ENCODE measurements at regions of chr5 and their contacts with region 1.

Region 1: GRCh38 chr5:137660349-137660817 is 75.5 kb downstream of the KLHL3 start:
- DNase-seq: peak; percentile 23
- ATAC-seq: peak; percentile 77
- H3K4me3 Mint-ChIP-seq: no peak overlapping the region
- H3K27ac Mint-ChIP-seq: no peak overlapping the region
- H3K4me1 Mint-ChIP-seq: peaks cover 2% of the 10 kb centered on the region
- H3K27me3 Mint-ChIP-seq: no peaks in the 10 kb centered on the region
- CTCF ChIP-seq: peak; percentile 17

Region 2: DNA sequence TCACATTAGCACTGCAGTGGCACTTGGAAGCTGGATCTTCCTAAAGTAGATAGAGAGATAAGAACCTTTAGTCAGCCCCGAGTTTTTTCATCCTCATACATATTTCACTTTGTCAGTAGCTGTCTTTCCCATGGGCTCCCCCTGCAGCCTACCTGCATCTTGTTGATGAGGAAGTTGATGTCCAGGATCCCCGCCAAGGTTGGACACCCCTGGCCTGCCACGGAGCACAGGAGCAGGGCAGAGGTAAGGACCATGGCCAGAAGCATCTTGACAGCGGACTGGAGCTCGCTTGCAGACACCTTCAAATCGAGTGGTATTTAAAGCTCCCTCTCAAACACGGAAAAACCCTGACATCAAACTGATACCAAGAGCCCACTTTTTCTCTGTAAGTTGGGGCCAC is 1764.8 kb before region 1 on chr5 and contains the start of gene IL9:
- CTCF ChIA-PET with region 1: no interaction called
- POLR2A ChIA-PET with region 1: no interaction called
- intact Hi-C with region 1: no loop called
- DNase-seq: no peak
- ATAC-seq: no peak
- H3K4me3 Mint-ChIP-seq: no peak within 1 kb of the TSS
- H3K27ac Mint-ChIP-seq: no peak within 1 kb of the TSS
- H3K4me1 Mint-ChIP-seq: no peaks in the 10 kb centered on the region
- H3K27me3 Mint-ChIP-seq: peaks cover 20% of the 10 kb centered on the region
- CTCF ChIP-seq: no peak
- total RNA-seq, gene IL9: not detected in 2 replicates

Region 3: DNA sequence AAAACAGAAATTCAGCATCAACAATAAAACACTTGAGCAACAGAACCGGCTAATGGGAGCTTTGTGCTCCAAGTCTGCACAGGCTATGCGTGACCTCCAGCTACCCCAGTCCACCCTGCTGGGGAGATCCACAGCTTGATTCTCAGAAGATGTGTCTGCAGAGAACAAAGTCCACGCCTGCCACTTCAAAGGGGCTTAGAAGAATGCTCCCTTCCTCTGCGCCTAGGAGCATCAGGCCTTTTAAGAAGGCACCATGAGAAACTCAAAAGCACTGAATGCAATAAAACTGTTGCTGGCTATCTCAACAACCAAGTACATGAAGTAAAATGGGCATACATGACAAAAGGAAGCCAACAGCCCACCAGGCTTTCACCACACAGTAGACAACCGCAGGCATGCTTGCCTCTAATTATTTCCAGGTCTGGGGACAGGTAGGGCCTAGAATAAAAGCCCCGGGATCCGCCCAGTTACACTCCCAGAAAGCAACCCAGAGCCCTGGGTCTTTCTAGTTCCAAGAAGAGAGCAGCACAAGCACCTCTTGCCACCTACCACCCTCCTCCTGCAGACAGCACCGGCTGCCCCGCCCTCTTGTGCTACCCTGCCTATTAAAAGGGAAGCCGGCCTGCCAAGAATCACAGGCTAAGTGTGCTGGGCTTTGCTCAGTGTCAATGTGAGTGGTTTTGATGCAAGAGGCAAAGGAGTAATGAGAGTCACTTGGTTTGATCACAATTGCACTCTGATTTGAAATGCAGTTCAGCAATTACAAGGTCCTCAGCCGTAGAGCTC is 284.4 kb before region 1 on chr5:
- CTCF ChIA-PET with region 1: no interaction called
- POLR2A ChIA-PET with region 1: no interaction called
- intact Hi-C with region 1: no loop called
- DNase-seq: no peak
- ATAC-seq: no peak
- H3K4me3 Mint-ChIP-seq: no peak overlapping the region
- H3K27ac Mint-ChIP-seq: no peak overlapping the region
- H3K4me1 Mint-ChIP-seq: no peaks in the 10 kb centered on the region
- H3K27me3 Mint-ChIP-seq: peaks cover 7% of the 10 kb centered on the region
- CTCF ChIP-seq: no peak

Region 4: GRCh38 chr5:137619191-137619870 is 41.1 kb before region 1 on chr5:
- CTCF ChIA-PET with region 1: no interaction called
- POLR2A ChIA-PET with region 1: interaction called, 10 read pairs
- intact Hi-C with region 1: no loop called
- DNase-seq: no peak
- ATAC-seq: no peak
- H3K4me3 Mint-ChIP-seq: no peak overlapping the region
- H3K27ac Mint-ChIP-seq: no peak overlapping the region
- H3K4me1 Mint-ChIP-seq: peaks cover 5% of the 10 kb centered on the region
- H3K27me3 Mint-ChIP-seq: no peaks in the 10 kb centered on the region
- CTCF ChIP-seq: no peak

Region 5: GRCh38 chr5:137735555-137736284 is 75.3 kb after region 1 on chr5 and contains the start of gene KLHL3:
- CTCF ChIA-PET with region 1: interaction called, 80 read pairs
- POLR2A ChIA-PET with region 1: no interaction called
- intact Hi-C with region 1: no loop called
- DNase-seq: peak; percentile 15
- ATAC-seq: peak; percentile 47
- H3K4me3 Mint-ChIP-seq: no peak within 1 kb of the TSS
- H3K27ac Mint-ChIP-seq: no peak within 1 kb of the TSS
- H3K4me1 Mint-ChIP-seq: no peaks in the 10 kb centered on the region
- H3K27me3 Mint-ChIP-seq: peaks cover 2% of the 10 kb centered on the region
- CTCF ChIP-seq: no peak
- total RNA-seq, gene KLHL3: 5.3 and 5.9 TPM in 2 replicates

Region 6: DNA sequence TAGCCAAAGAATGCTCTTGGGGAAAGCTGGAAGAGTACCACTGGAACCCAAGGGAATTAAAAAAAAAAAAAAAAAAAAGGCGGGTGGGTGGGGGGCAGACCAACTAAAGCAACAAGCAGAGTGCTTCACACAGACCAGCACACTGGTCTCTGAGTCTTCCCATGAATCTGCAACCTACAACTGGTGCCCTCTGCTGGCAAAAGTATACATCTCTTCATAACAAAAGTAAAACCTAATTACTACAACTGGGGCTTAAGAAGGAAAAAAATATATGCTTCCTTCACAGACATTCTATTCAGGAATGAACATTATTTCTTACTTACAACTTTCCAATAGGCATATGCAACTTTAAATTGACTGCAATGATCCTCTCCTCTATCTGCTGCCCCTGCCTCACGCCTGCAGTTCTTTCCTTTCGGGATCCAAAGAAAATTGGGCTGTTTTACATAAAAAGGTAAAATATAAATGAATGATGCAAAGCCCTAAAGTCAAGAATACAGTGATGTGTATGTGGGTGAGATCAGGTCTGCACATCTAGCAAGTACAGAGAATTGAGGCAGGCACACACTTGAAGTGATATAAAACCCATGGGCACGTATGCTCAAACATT is 82.8 kb after region 1 on chr5:
- CTCF ChIA-PET with region 1: interaction called, 80 read pairs
- POLR2A ChIA-PET with region 1: no interaction called
- intact Hi-C with region 1: loop called (anchors 1 kb)
- DNase-seq: no peak
- ATAC-seq: peak; percentile 88
- H3K4me3 Mint-ChIP-seq: no peak overlapping the region
- H3K27ac Mint-ChIP-seq: no peak overlapping the region
- H3K4me1 Mint-ChIP-seq: peaks cover 4% of the 10 kb centered on the region
- H3K27me3 Mint-ChIP-seq: no peaks in the 10 kb centered on the region
- CTCF ChIP-seq: no peak

Region 7: GRCh38 chr5:137822158-137822764 is 161.9 kb after region 1 on chr5:
- CTCF ChIA-PET with region 1: interaction called, 3 read pairs
- POLR2A ChIA-PET with region 1: no interaction called
- intact Hi-C with region 1: loop called (anchors 1 kb)
- DNase-seq: no peak
- ATAC-seq: no peak
- H3K4me3 Mint-ChIP-seq: no peak overlapping the region
- H3K27ac Mint-ChIP-seq: no peak overlapping the region
- H3K4me1 Mint-ChIP-seq: no peaks in the 10 kb centered on the region
- H3K27me3 Mint-ChIP-seq: no peaks in the 10 kb centered on the region
- CTCF ChIP-seq: no peak

Region 8: GRCh38 chr5:137858223-137858916 is 198.0 kb after region 1 on chr5:
- CTCF ChIA-PET with region 1: no interaction called
- POLR2A ChIA-PET with region 1: no interaction called
- intact Hi-C with region 1: no loop called
- DNase-seq: no peak
- ATAC-seq: peak; percentile 91
- H3K4me3 Mint-ChIP-seq: peak overlapping the region; percentile 61
- H3K27ac Mint-ChIP-seq: peak overlapping the region; percentile 74
- H3K4me1 Mint-ChIP-seq: peaks cover 31% of the 10 kb centered on the region
- H3K27me3 Mint-ChIP-seq: no peaks in the 10 kb centered on the region
- CTCF ChIP-seq: no peak

Region 9: DNA sequence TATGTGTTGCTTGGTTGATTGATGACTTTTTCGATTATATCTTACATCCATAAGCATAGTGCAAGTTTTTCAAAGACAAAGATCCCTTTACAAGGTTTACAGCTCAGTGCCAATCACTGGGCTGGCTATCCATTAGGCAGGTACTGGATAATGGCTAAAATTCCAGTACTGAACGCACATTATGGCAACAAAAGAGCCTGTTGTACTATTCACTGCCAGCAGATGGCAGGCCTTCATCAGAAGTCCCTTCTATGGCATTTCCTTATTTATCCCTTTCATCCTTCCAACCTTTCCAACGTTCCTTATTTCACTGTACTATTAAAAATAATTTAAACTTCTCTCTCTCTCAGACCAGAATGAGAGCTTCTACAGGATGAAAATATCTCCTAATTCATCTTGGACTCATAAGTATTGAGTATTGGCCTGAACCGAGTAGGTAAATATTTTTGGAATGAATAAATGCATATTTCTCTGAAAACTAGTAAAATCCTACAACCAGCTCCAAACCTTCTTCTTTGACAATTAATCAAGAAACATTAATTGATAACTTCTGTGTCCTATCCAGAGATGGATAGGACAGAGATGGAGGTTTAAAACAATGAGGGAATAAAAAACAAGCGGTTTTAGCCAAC is 416.8 kb after region 1 on chr5:
- CTCF ChIA-PET with region 1: interaction called, 3 read pairs
- POLR2A ChIA-PET with region 1: no interaction called
- intact Hi-C with region 1: loop called (anchors 1 kb)
- DNase-seq: no peak
- ATAC-seq: peak; percentile 54
- H3K4me3 Mint-ChIP-seq: no peak overlapping the region
- H3K27ac Mint-ChIP-seq: no peak overlapping the region
- H3K4me1 Mint-ChIP-seq: peaks cover 15% of the 10 kb centered on the region
- H3K27me3 Mint-ChIP-seq: no peaks in the 10 kb centered on the region
- CTCF ChIP-seq: peak; percentile 67

Region 10: DNA sequence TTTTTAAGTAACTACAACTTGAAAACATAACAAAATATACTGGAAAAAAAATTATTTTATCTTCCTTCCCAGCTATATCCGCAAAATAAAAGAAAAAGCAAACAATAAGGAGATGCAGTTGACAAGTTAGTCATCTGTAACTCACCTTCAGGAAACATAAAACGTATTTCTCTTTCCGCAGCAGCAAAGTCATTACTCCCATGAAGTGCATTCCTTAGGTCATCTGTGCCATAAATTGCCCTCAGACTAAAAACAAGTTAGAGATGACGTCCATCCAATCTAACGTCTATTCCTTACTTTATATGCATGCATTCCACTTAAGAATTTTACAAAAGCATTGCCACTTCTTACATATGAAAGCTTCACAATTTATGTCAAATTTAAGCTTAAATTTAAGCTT is 468.0 kb after region 1 on chr5:
- CTCF ChIA-PET with region 1: interaction called, 7 read pairs
- POLR2A ChIA-PET with region 1: no interaction called
- intact Hi-C with region 1: loop called (anchors 1 kb)
- DNase-seq: no peak
- ATAC-seq: no peak
- H3K4me3 Mint-ChIP-seq: no peak overlapping the region
- H3K27ac Mint-ChIP-seq: no peak overlapping the region
- H3K4me1 Mint-ChIP-seq: peaks cover 3% of the 10 kb centered on the region
- H3K27me3 Mint-ChIP-seq: peaks cover 3% of the 10 kb centered on the region
- CTCF ChIP-seq: no peak